HEK293T (cell line): ENCODE measurements at regions of chrX and their contacts with region 1.

Region 1: GRCh38 chrX:102950908-102951866 is 14.1 kb downstream of the RAB40AL start:
- DNase-seq: peak; percentile 76

Region 2: DNA sequence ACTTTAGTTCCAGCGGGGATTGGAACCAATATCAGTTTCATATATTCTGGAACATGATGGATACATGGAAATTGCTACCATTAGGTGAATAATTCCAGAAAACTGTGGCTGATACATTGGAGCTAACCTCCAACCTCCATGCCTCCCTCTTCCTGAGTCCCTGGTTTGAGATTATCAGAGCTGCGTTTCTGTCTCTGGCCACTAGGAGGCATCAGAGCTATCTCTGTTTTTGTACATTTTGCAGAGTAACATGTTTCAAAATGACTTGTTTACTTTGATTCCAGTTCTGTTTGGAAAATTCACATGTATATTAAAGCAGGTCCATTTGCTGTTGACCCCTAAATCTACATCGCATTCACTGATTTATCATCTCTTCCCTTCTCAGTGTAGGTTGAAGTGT is 16.6 kb before region 1 on chrX:
- CTCF ChIA-PET with region 1: interaction called, 34 read pairs
- POLR2A ChIA-PET with region 1: interaction called, 3 read pairs
- DNase-seq: peak; percentile 68

Region 3: DNA sequence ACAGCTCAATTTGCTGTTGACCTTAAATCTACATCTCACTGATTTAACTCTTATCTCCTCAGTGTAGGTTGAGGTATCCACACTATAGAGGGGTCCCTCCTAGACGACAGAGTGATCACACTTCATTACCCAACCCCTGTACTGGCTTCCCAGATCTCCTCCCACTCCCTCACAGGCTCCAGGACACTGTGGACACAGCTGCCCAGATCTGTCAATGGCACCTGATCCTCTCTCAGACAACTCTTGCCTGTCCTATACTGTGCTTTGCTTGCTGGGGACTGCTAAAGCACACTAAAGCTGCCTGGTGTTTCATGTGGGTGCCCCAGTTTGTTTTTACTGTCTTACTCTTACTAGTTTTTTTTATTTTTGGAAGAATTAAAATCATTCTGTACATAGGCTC is 13.8 kb after region 1 on chrX:
- CTCF ChIA-PET with region 1: interaction called, 28 read pairs
- POLR2A ChIA-PET with region 1: interaction called, 3 read pairs
- DNase-seq: no peak

Region 4: DNA sequence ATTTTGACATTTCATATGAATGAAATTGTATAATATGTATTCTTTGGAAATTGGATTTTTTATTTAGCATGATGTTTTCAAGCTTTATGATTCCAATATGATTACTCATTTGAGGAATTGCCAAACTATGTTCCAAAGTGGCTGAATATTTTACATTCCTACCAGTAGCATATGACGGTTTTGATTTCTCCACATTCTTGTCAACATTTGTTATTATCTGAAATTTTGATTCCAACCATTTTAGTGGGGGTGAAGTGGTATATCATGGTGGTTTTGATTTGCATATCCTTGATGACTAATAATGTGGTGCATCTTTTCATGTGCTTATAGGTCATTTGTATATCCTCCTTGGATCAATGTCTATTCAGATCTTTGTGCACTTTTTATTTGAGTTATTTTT is 115.4 kb after region 1 on chrX:
- CTCF ChIA-PET with region 1: no interaction called
- POLR2A ChIA-PET with region 1: no interaction called
- DNase-seq: no peak

Region 5: DNA sequence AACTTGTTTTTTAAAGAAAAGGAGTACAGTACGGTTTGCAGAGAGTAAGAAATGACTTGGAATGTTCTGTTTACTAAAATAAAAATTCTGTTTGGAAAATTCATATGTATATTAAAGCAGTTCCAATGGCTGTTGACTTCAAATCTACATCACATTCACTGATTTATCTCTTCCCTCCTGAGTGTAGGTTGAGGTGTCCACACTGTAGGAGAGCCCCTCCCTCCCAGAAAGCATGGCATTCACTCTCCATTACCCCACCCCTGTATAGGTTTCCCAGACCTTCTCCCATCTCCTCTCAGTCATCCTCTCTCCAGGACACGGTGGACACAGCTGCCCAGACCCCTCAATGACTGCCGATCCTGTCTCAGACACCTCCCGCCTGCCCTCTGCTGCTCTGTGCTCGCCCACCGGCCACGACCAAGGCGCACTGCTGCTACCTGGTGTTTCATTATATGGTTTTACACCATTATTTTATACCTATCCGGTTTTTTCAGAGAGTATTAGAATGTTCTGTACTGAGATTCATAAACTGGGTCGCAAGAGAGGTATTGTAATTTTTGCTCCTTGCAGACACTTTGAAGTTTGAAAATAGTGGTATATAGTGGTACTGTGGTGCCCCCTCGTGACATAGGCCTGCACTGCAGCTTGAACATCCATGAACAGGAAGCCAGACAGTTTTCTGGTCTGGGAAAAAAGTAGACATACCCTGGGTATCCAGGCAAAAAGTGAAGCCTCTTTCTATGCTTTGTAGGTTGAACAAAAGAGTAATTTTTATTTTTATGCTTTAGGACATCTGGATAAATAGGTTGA is 225.0 kb after region 1 on chrX:
- CTCF ChIA-PET with region 1: interaction called, 28 read pairs
- POLR2A ChIA-PET with region 1: no interaction called
- DNase-seq: peak; percentile 81